ENCODE measurements at regions of chr12 and their contacts with region 1.

Region 1: GRCh38 chr12:67789266-67789665 is 140.7 kb downstream of the DYRK2 start:
- DNase-seq: no peak
- ATAC-seq: no peak
- H3K4me3 ChIP-seq: no peak overlapping the region
- H3K27ac ChIP-seq: no peak overlapping the region
- H3K4me1 ChIP-seq: peaks cover 5% of the 10 kb centered on the region; the same call in 1 of the 2 replicates
- H3K27me3 ChIP-seq: no peaks in the 10 kb centered on the region
- CTCF ChIP-seq: no peak

Region 2: DNA sequence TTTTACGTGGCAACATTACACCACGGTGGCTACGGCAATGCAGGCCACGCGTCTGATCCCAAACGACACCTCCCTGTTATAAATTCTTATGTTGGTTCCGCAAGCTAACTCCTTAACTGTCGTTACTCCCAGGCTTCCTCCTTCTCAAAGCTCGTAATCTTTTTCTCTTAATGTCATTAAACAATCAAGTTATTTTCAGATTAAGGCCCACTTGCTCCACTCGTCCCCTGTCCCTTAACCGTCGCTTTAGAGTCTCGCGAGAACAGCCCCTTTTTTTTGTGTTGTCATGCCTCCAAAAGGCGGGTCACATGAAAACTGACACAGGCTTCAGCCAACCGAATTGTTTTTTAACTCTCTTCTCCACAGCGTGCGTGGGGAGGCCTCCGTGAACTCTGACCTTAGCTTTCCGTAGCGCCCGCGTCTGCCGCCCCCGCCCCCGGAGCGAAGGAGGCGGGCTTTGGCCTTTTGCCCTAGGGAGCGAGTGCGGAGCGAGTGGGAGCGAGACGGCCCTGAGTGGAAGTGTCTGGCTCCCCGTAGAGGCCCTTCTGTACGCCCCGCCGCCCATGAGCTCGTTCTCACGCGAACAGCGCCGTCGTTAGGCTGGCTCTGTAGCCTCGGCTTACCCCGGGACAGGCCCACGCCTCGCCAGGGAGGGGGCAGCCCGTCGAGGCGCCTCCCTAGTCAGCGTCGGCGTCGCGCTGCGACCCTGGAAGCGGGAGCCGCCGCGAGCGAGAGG is 520.2 kb before region 1 on chr12 and contains the start of gene CAND1:
- CTCF ChIA-PET with region 1: no interaction called
- POLR2A ChIA-PET with region 1: interaction called, 13 read pairs
- intact Hi-C with region 1: no loop called
- DNase-seq: peak; percentile 98
- ATAC-seq: peak; percentile 78
- H3K4me3 ChIP-seq: peak within 1 kb of the TSS; percentile 88
- H3K27ac ChIP-seq: peak within 1 kb of the TSS; percentile 90
- H3K4me1 ChIP-seq: peaks cover 22% of the 10 kb centered on the region
- H3K27me3 ChIP-seq: no peaks in the 10 kb centered on the region
- CTCF ChIP-seq: no peak
- total RNA-seq, gene CAND1: 124 and 129 TPM in 2 replicates

Region 3: DNA sequence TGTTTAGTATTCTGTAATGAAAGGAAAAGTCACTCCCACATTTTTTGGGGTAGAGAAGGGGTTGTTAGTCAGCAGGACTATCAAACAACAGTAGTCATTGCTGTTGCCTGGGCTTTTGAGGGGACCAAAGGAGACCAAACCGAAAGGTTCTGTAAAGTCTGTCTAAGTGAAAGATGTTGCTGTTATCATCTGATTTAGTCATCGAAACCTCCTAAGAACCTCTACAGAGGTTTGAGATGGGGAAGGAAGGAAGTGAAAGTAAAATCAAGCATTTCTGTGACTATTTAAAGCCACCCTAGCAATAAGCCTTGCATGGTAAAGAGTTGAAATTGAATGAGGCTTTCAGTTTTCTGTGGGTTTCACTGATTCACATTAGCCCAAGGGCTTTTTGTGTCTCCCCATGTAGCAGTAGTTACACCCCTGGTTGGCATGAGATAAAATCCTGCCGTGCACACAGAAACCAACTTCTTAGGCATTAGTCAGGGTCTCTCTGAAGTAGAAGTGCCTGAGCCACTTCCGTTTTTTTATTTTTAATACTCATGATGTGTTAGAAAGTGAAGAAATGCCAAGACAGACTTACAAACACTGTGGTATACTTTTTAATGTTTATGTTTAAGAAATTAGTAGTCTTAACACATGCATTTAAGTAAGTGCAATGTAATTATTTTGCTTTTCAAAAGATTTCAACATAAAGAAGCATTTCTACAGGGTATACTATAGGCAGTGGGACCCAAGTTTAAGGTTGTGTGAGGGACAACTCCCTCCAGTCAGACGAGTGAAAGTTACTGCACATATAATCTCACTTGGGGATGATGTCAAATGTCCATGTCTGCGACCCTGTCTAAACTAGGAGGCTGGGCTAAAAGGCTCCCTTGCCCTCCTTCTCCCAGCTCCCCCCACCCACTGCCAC is 90.3 kb before region 1 on chr12:
- CTCF ChIA-PET with region 1: no interaction called
- POLR2A ChIA-PET with region 1: no interaction called
- intact Hi-C with region 1: no loop called
- DNase-seq: peak; percentile 53
- ATAC-seq: no peak
- H3K4me3 ChIP-seq: peak overlapping the region; percentile 14; the same call in 1 of the 2 replicates
- H3K27ac ChIP-seq: no peak overlapping the region; the same call in 1 of the 2 replicates
- H3K4me1 ChIP-seq: peaks cover 27% of the 10 kb centered on the region
- H3K27me3 ChIP-seq: no peaks in the 10 kb centered on the region
- CTCF ChIP-seq: no peak